ENCODE measurements at regions of chr17 and their contacts with region 1.

Region 1: GRCh38 chr17:66915204-66916096 is 49.1 kb upstream of the CACNG4 start:
- DNase-seq: peak; percentile 60
- H3K4me3 ChIP-seq: no peak overlapping the region
- H3K27ac ChIP-seq: no peak overlapping the region
- H3K4me1 ChIP-seq: no peaks in the 10 kb centered on the region
- H3K27me3 ChIP-seq: no peaks in the 10 kb centered on the region
- CTCF ChIP-seq: peak; percentile 68

Region 2: DNA sequence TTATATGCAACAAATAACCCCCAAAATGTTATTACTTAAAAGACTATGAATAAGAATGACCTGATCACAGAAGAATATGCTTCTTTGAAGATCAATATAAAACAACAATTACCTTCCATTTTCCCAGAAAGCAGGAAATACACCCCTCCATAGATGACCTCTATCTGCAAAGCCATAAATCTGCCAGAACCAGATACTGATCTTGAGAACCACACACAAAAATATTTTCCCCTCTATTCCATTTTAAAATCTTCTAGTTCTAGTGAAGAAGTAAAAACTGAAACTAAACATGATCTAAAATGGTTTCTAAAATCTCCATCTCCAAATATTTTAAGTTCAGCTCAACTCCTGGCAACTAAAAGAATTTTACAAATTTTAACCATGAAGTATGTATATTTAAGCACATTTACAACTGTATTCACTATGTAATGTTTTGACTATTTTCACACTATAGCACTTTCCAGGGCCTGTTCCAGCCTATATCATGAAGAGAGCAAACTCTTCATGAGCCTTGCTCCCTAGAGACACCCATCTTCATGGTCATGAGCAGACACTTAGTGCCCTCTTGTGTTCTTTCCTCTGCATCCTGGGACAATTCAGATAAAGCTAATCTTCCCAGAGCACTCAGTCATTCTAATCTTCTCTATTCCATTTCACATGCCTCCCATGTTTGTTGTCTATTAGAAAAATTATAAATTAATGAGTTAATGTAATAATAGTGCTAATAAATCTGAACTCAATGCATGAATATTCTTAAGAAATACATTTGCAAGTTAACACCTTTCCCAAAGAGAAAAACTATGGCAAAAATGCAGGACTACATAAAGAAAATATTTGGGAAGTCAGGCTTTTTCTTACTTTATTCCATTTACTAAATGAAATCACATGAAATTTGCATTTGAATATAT is 242.5 kb after region 1 on chr17:
- CTCF ChIA-PET with region 1: interaction called, 13 read pairs
- POLR2A ChIA-PET with region 1: no interaction called
- intact Hi-C with region 1: loop called (anchors 2 kb)
- DNase-seq: peak; percentile 84
- H3K4me3 ChIP-seq: no peak overlapping the region
- H3K27ac ChIP-seq: no peak overlapping the region
- H3K4me1 ChIP-seq: peaks cover 4% of the 10 kb centered on the region
- H3K27me3 ChIP-seq: no peaks in the 10 kb centered on the region
- CTCF ChIP-seq: peak; percentile 66

Measured in A673 (cell line).